ENCODE measurements at regions of chr6 and their contacts with region 1.

Region 1: DNA sequence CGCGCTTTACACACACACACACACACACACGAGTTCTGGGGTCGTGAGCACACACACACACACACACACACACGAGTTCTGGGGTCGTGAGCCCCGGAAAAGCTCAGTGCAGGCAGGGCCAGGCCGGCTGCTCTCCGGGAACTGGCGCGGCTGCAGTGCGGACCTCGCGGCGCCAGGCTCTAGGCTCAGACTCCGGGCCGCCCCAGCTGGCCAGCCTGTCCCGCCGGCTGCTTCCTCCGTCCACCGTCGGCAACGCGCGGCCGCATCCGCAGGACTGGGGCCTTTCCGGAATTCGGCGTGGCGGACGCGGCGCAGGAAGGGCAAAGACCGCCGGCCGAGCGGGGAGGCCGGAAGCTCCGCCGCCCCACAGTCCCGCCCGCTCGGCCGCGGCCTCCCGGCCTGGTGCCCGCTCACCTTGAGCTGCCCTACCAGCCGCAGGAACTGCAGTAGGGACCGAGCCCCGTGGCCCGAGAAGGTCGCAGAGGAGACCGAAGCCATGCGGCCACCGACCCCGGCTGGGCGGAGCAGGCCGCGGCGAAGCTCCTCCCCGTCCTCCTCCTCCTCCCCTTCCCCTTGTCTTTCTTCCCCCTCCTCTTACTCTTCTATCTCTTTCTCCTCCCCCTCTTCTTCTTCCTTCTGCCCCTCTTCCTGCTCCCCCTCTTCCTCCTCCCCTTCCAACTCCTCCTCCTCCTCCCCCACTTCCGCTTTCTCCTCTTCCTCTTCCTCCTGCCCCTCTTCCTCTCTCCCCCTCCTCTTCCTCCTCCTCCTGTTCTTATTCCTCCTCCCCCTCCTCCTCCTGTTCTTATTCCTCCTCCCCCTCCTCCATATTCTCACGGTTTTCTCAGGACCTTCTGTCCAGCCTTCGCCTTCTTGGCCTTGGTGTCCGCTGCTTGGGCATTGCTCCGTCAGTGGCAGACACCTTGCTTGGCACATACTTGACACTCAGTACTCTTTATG is at the start of gene HDDC2:
- DNase-seq: peak in 8 of 10 donors; percentile 17 to 73 (median 46)
- H3K4me3 ChIP-seq: peak within 1 kb of the TSS; percentile 59 to 92 (median 82)
- H3K27ac ChIP-seq: peak within 1 kb of the TSS in 57 of 59 donors; percentile 19 to 94 (median 83)
- H3K27me3 ChIP-seq: no peaks in the 10 kb centered on the region
- CTCF ChIP-seq: peak in 9 of 56 donors; percentile 8 to 36 (median 22)
- total RNA-seq, gene HDDC2: 55.3 to 170 (median 91.5) TPM

Region 2: DNA sequence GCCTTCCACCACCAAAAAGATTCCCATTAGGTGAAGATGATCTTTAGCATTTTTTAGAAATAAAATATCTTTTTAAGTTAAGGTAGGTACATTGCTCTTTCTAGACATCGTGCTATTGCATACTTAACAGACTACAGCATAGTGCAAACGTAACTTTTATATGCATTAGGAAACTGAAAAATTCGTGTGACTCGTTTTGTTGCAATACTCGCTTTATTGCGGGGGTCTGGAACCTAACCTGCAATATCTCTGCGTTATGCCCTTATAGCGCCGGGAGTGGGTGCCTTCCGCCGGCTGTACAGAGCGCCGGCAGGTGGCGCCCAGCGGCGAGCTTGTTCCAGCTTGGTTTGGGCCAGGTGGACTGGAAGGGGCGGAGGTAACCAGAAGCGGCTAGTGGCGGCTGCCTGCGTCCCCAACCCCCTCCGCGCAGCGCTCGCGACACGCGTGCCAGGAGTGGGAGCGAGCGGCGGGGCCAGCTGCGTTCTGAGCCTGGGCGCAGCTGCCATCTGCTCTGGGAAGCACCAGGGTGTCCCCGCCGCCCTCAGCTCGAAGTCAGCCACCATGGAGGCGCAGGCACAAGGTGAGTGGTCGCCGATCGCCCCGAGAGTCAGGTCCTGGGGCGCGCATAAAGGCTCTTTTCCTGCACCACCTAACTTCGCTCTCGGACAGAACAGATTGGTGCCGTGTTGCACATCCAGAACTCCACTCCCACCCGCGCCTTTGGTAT is 148.2 kb before region 1 on chr6 and contains the start of gene TPD52L1:
- intact Hi-C with region 1: loop called (anchors 5 to 10 kb)
- DNase-seq: peak; percentile 50 to 83 (median 70)
- H3K4me3 ChIP-seq: peak within 1 kb of the TSS; percentile 53 to 88 (median 73)
- H3K27ac ChIP-seq: peak within 1 kb of the TSS in 56 of 59 donors; percentile 13 to 91 (median 78)
- H3K27me3 ChIP-seq: peaks cover 0 to under 1% (median 0%) of the 10 kb centered on the region in 45 donors
- CTCF ChIP-seq: peak; percentile 60 to 93 (median 81)
- total RNA-seq, gene TPD52L1: 42.2 to 338 (median 95.8) TPM